H1 (cell line): ENCODE measurements at regions of chr6 and their contacts with region 1.

Region 1: DNA sequence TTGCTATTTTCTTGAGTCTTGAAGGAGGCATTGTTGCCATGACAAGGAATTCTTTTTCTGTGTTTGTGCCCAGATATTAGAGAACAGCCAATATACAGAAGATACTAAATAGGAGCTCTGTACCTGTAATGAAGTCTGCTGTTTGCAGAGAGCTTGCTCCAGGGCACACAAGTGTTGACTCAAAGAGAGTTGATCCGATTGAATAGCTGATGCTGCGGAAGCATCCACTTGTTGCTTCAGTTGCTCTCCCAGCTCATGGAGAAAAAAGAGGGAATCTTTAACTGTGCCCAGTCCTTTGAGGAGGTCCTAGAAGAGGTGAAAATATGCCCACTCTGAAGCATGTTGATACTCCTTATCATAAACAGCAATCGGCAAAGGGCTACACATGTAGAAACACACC is 411.4 kb downstream of the ESR1 start:
- DNase-seq: no peak
- H3K4me3 ChIP-seq: no peak overlapping the region
- H3K27ac ChIP-seq: no peak overlapping the region
- H3K4me1 ChIP-seq: peaks cover 0 to 4% (median 0%) of the 10 kb centered on the region in 4 experiments; a peak in 1 of 7 replicates
- H3K27me3 ChIP-seq: peaks cover 0 to 1% (median 0%) of the 10 kb centered on the region in 4 experiments; a peak in 1 of 7 replicates
- CTCF ChIP-seq: no peak
- EP300 ChIP-seq: no peak
- POLR2A ChIP-seq: no peak
- RAD21 ChIP-seq: no peak

Region 2: DNA sequence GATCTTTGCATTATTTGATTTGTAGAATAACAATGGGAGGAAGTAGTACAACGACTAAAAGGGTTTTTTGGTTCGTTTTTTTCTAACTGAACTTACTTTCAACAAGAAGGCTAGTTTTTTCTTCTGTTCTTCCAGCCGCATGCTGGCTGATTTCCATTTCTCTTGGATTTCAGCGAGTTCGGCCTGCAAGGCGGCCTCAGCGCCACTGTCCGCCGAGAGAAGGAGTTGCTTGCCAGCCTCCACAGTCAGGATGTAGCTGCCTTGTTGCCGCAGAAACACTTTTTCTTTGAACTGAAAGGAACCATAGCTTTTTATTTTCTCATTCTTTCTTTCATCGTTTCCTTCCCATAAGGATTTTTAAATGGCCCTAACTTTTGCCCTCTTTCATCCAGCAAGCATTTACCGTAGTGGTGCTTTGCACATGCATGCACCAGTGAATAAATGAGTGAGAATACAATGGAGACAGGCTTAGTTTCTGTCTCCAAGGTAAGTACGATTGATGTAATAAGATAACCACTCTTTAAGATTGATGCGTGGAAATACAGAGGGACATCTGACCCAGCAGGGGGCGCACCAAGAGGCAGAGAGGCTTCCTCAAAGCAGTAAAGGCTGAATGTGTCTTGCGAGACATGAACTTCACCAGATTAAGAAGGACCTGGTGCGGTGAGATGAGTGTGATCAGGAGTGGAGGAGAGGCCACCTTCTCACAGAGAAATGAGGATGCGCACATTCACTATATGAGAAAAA is 12.6 kb before region 1 on chr6:
- CTCF ChIA-PET with region 1: interaction called, 13 read pairs
- POLR2A ChIA-PET with region 1: no interaction called
- DNase-seq: peak; percentile 15 to 67
- H3K4me3 ChIP-seq: no peak overlapping the region
- H3K27ac ChIP-seq: no peak overlapping the region
- H3K4me1 ChIP-seq: no peaks in the 10 kb centered on the region
- H3K27me3 ChIP-seq: no peaks in the 10 kb centered on the region
- CTCF ChIP-seq: peak; percentile 42 to 67 (median 54)
- EP300 ChIP-seq: no peak
- POLR2A ChIP-seq: no peak
- RAD21 ChIP-seq: peak; percentile 40 to 48; a peak in 3 of 4 replicates